Head of caudate nucleus (tissue), 42 donors: ENCODE measurements at regions of chr6 and their contacts with region 1.

Region 1: DNA sequence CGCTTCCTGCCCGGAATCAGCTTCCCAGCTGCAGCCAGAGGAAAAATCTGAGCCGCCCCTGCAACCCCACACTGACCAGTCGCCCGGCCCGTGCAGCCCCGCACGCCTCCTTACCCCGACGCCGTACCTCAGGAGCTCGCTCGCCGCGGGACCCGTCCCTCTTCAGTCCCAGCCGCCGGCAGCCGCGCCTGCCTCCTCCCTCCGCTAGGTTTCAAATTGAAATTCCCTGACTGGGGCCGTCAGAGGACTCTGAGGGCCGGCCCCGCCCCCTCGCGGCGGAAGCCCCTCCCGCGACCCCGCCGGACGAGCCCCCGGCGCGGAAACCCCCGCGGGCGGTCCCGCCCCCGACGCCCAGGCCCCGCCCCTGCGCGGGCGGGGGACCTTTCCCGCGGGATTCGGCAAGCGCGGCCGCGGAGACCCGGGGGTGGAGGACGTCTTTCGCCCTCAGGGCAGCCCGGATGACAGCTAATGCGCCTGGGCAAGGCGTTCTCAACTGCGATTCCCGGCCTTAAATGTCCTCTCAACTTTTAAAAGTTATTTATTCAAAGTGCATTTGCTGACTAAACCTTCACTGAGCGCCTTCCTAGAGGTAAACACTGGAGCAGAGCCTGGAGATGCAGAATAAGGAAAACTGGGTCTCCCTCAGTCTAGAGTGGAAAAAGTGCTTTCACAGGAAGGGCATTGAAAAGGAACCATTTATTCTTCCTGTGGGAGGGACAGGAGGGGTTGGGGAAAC is at the start of gene EPB41L2:
- DNase-seq: peak; percentile 64 to 95 (median 88)

Region 2: GRCh38 chr6:130885392-130886192 is 177.6 kb before region 1 on chr6:
- intact Hi-C with region 1: loop called (anchors 5 kb)
- DNase-seq: peak in 38 of 42 donors; percentile 12 to 94 (median 78)

Region 3: GRCh38 chr6:131015630-131016263 is 47.4 kb before region 1 on chr6:
- intact Hi-C with region 1: loop called (anchors 5 kb)
- DNase-seq: no peak

Region 4: DNA sequence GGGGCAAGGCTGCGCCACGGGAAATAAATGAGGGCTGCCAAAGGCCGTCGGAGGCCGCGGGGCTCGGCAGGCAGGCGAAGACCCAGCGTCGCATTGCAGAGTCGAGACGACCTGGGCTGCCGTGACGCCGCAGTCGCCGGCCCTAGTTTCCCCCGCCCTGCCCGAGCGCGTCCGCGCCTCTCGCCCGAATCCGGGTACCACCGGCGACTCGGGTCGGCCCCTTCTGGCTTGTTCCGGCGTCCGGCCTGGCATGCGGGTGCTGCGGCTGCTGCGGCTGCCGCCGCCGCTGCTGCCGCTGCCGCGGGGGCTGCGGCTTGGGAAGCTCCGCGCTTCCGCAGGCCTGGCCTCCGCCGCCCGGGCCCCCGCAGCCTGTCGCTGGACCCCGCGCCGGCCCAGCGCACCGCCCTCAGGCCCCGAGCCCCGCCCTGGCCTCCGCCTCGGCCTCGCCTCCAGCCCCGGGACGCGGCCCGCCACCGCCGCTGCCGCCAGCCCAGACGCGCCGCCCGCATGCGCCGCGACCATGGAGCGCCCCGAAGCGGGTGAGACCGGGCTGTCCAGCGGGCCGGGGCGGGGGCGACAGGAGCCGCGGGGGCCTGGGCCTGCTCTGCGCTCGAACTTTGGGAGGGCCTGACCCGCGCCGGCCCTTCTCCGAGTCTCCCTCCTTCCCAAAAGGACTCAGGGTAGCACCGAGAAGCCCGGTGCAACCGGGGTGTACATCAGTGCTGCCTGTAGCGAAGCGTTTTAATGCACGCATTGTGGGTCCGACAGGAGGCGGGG is 72.2 kb after region 1 on chr6 and contains the start of gene AKAP7:
- intact Hi-C with region 1: loop called (anchors 5 kb)
- DNase-seq: peak; percentile 33 to 91 (median 80)